Left cardiac atrium (tissue), 4 donors: ENCODE measurements at regions of chr16 and their contacts with region 1.

Region 1: DNA sequence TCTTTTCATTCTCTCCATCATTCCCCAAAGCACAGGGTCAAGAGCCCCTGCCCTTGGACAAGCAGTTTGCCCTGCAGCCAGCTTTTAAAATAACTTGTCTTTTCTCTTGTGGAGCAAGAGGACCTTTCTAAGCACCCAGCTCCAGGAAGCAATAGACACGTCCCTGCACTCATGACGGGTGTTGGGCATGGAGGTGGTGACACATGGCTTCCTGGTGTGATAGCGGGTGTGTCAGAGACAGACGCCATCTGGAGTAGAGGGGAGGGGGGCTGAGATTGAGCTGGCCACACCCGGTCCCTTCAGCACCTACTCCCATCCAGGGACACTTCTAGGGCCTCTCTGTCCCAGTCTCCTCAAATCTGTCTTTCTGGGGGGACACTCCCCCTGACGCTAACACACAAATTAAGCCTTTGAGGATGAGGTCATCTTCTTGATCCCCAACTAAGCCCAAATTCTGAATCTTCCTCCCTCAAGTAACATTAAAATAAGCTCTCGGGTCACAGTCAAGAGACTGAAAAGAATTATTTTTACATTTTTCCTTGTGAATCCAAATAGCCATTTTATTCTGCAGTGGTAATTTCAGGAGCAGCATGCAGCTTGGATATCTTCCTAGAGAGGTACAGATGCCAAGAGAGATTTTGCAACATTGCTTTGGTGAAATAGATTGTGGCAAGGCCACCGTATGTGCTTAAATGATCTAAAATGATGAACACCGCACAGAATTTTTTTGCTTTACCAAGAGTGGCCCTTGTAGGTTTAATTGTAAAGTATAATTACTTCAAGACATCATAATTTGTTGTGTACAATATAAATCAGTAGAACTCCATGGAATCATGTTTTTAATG is 216.6 kb upstream of the IRX3 start:
- DNase-seq: peak; percentile 69
- ATAC-seq: peak; percentile 93 to 96

Region 2: DNA sequence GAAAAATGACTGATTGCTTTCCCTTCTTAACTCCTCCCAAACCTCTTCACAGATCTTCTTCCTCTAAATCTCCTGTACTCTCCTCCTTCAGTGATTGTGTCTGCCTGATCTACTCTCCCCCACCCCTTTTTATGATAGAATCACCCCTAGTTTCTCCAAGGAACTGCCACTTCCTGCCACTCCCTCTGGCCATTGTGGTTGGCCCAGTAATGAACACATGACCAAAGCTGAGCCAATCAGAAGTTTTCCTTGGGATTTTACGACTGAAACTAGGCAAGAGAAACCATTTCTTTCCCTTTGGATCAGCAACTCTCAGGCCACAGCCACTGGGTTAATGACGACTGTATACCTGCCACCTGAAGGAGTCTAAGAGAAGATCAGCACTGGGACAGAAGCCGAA is 232.5 kb before region 1 on chr16:
- intact Hi-C with region 1: no loop called
- DNase-seq: no peak
- ATAC-seq: no peak

Region 3: DNA sequence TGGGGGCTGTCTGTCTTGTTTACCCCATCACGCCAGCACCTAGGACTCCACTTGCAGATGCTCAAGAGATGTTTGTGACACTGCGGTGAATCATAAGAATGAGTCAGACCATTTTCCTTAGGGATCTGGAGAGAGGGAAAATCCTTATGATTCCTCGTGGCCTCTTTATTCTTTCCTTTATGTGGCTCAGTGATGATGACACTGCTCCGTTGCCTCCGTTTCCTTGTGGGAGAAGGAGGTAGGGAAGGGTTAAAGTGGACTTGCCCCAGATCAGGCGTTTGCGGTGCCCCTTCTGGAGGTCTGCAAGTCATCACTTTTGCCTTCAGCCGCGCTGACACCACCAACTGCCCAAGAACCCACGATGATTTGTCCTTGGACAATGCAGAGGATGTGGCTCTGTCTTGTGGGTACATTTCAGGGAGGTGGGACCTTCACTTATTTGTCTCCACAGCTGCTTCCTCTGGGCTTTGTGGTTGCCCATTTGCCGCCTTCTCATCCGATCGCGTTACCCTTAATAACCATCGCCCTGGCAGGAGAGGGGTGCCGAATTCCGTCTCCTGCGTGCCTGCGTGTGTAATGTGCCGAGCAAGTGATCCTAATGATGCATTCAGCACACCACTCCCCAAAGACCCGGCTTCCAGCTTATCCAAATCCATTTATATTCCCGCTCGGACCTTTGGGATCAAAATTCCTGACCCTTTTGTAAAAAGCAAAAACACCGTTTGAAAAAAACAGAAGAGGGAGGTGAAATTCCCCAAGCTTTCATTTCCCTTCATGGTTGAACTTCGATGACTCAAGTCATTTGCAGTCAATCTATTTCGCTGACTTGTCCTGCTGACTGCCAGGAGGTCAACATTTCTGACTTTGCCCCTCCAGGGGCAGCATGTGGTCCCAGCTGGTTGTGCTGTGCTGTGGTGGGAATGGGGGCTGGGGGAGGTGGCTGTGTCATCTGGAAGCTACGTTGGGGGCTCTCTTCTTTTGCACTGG is 129.4 kb before region 1 on chr16:
- intact Hi-C with region 1: loop called in 1 of 2 experiments (anchors 5 kb)
- DNase-seq: no peak
- ATAC-seq: peak in 1 of 2 donors; percentile 48